K562 (cell line): ENCODE measurements at regions of chr5 and their contacts with region 1.

Region 1: DNA sequence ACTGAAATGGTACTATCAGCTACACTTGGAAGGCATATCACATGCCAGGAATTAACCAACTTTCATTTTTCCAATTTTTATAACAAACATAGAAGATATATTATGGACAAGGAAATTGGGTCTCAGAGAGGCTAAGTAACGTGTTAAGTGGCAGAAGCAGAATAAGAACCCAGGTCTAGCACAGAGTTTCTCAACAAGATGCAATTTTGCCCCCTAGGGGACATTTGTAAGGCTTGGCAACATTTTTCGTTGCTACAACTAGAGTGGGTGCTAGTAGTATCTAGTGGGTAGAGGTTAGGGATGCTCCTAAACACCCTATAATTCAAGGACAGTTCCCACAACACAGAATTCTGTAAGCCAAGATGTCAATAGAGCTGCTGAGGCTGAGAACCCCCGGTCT is 180.6 kb downstream of the SNCAIP start:
- DNase-seq: peak in 2 of 4 experiments; percentile 7 to 25
- ATAC-seq: peak; percentile 72
- H3K4me3 ChIP-seq: no peak overlapping the region
- H3K27ac ChIP-seq: no peak overlapping the region
- H3K4me1 ChIP-seq: peaks cover 0 to 4% of the 10 kb centered on the region in 2 experiments; a peak in 2 of 5 replicates
- H3K27me3 ChIP-seq: no peaks in the 10 kb centered on the region
- CTCF ChIP-seq: peak; percentile 24 to 37 (median 28); a peak in 3 of 6 replicates
- EP300 ChIP-seq: no peak
- POLR2A ChIP-seq: no peak
- RAD21 ChIP-seq: peak in 1 of 2 experiments; percentile 49; a peak in 2 of 4 replicates

Region 2: DNA sequence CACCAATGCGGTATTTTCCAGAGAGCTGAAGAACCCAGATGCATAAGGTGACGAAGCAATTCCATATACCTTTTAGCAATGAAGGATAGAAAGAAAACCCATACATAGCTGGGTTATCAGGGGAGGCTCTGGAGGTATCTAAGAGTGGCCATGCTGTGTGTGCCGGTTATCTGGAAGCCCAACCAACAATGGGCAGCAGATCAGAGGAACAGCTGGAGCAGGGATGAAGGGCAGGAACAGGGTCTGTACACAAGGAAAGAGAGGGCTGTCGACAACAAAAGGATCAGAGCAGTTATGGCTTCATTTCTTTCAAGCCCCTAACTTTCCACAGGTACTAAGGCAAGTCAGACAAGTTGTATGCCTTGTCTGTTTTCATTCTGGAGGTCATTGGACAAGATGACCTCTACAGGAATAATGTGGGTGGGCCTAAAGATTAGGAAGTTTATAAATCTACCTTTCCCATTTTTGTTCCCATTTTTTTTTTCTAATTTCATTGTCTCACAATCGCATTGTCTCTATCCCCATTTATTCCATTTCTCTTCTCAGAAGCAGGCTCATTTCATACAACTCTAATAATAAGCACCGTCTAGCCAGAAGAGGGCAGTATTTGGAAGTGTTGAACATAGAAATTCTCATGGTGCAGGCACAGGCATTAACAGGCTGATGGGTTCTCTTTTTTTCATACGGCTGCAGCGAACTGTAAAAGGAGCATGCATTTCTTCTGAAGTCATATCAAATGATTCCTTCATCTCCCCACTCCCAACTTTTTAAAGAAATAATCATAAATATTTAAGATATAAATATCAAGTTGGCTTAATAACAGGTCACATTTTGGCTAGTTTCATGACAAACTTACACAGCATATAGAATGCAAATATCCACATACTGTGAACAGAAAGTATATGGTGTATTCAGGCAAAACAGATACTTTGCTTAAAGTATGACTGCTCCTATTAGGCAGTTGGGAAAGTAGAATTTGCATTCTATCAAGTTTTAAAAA is 299.9 kb before region 1 on chr5:
- CTCF ChIA-PET with region 1: no interaction called
- POLR2A ChIA-PET with region 1: no interaction called
- in situ Hi-C with region 1: loop called (anchors 10 kb)
- intact Hi-C with region 1: loop called (anchors 5 kb)
- DNase-seq: peak; percentile 42 to 74 (median 48)
- ATAC-seq: peak; percentile 95
- H3K4me3 ChIP-seq: no peak overlapping the region
- H3K27ac ChIP-seq: no peak overlapping the region
- H3K4me1 ChIP-seq: peaks cover 0 to 5% of the 10 kb centered on the region in 2 experiments; a peak in 2 of 5 replicates
- H3K27me3 ChIP-seq: no peaks in the 10 kb centered on the region
- CTCF ChIP-seq: peak; percentile 44 to 68 (median 51); a peak in 4 of 6 replicates
- EP300 ChIP-seq: no peak
- POLR2A ChIP-seq: no peak
- RAD21 ChIP-seq: peak; percentile 46 to 65

Region 3: DNA sequence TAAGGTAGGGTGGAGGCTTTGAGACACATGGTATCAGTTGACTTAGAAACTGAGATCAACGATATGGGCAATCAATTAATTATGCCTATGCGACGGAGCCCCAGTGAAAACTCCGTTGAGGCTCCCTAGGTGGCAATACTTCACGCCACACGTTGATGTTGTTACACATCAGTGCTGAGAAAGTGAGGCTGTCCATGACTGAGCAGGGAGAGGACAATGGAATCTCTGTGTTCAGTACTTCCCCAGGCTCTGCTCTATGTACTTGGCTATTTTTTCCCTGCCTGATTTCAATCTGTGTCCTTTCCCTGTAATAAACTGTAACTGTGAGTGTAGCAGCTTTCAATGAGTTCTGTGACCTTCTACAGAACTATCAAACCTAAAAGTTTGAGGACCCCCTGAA is 31.1 kb after region 1 on chr5:
- CTCF ChIA-PET with region 1: no interaction called
- POLR2A ChIA-PET with region 1: no interaction called
- in situ Hi-C with region 1: no loop called
- intact Hi-C with region 1: no loop called
- DNase-seq: no peak
- ATAC-seq: no peak; the same call in 2 of the 3 replicates
- H3K4me3 ChIP-seq: no peak overlapping the region
- H3K27ac ChIP-seq: no peak overlapping the region
- H3K4me1 ChIP-seq: no peaks in the 10 kb centered on the region
- H3K27me3 ChIP-seq: no peaks in the 10 kb centered on the region
- CTCF ChIP-seq: no peak
- EP300 ChIP-seq: no peak
- POLR2A ChIP-seq: no peak
- RAD21 ChIP-seq: no peak